ENCODE measurements at regions of chr5 and their contacts with region 1.

Region 1: GRCh38 chr5:141623186-141623585 is 4.4 kb upstream of the DIAPH1 start:
- DNase-seq: no peak
- ATAC-seq: no peak
- H3K4me3 ChIP-seq: no peak overlapping the region
- H3K27ac ChIP-seq: no peak overlapping the region
- H3K4me1 ChIP-seq: peaks cover 0 to 3% (median 3%) of the 10 kb centered on the region in 3 donors
- H3K27me3 ChIP-seq: no peaks in the 10 kb centered on the region
- CTCF ChIP-seq: no peak

Region 2: DNA sequence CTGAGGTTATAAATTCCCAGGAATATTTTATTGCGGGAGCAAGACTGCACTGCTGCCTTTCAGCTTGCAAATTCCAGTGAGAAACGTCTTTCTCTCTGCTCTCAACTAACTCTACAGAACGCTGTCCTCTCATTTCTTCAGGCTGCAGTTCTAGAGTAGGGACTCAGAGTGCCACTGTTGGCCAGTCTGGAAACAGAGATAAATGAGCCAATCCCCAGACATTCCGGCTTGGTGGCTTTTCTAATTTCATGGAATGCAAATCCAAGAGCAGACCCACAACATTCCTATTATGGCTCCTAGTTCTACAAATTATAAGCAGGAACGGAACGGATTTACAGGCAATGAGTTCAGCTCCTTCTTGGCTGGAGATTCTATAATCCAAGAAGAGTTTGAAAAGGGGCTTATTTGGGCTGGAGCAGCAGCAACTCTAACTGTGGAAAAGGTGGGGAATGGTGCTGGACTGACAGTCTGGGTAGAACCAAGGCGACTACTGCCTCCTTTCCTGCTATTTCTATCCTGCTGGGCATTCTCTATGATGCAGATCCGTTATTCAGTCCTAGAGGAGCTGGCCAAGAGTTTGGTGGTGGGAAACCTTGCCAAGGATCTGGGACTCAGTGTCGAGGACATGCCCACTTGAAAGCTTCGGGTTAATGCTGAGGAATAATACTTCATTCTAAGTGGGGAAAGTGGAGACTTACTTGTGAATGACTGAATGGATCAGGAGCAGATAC is 183.6 kb before region 1 on chr5:
- intact Hi-C with region 1: no loop called
- DNase-seq: no peak
- ATAC-seq: no peak
- H3K4me3 ChIP-seq: no peak overlapping the region
- H3K27ac ChIP-seq: no peak overlapping the region
- H3K4me1 ChIP-seq: no peaks in the 10 kb centered on the region
- H3K27me3 ChIP-seq: no peaks in the 10 kb centered on the region
- CTCF ChIP-seq: no peak

Region 3: GRCh38 chr5:141585594-141585993 is 37.6 kb before region 1 on chr5:
- intact Hi-C with region 1: loop called in 1 of 3 experiments (anchors 5 kb)
- DNase-seq: no peak
- ATAC-seq: no peak
- H3K4me3 ChIP-seq: no peak overlapping the region
- H3K27ac ChIP-seq: no peak overlapping the region
- H3K4me1 ChIP-seq: no peaks in the 10 kb centered on the region
- H3K27me3 ChIP-seq: no peaks in the 10 kb centered on the region
- CTCF ChIP-seq: no peak

Region 4: DNA sequence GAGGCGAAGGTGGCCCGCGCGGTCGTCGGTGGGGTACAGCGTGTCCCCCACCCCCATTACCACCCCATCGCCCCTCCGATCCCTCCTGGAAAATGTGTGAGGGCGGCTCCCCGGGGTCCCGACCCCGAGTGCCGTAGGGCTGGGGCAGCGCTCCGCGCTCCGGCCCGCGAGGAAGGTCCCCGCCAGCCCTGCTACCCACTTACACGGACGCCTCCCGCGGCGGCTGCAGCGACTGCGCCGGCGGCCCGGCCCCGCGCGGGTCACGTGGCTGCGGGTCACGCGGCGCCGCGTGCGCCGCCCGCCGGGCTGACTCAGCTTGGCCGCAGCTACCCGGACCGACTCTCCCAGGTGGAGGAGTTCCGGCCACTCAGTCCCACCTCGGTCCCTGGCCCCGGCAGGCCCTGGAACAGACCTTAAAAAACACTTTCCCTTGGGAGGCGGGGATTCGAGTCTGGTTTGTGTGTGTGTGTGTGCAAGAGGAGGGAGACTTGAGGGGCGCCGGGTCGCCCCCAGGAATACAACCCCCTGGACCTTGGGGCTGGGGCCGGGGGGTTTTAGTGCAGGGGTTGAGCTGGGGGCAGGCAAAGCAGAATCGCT is 389.7 kb after region 1 on chr5 and contains the start of gene GNPDA1:
- intact Hi-C with region 1: no loop called
- DNase-seq: peak; percentile 79 to 94 (median 87)
- ATAC-seq: peak; percentile 91 to 97 (median 93)
- H3K4me3 ChIP-seq: peak within 1 kb of the TSS; percentile 60 to 84 (median 68)
- H3K27ac ChIP-seq: peak within 1 kb of the TSS; percentile 47 to 85 (median 73)
- H3K4me1 ChIP-seq: peaks cover 0 to 20% (median 0%) of the 10 kb centered on the region in 3 donors
- H3K27me3 ChIP-seq: no peaks in the 10 kb centered on the region
- CTCF ChIP-seq: no peak
- total RNA-seq, gene GNPDA1: 4.1 to 15.2 (median 7.4) TPM

Measured in pancreas (tissue), 10 donors.